ENCODE measurements at regions of chr10 and their contacts with region 1.

Region 1: GRCh38 chr10:102009801-102010425 is 46.1 kb downstream of the ARMH3 start:
- DNase-seq: peak in 1 of 2 donors; percentile 45
- H3K4me3 ChIP-seq: no peak overlapping the region
- H3K27ac ChIP-seq: no peak overlapping the region
- H3K4me1 ChIP-seq: peaks cover 0 to 4% (median 2%) of the 10 kb centered on the region in 4 donors
- H3K27me3 ChIP-seq: no peaks in the 10 kb centered on the region
- CTCF ChIP-seq: peak; percentile 79 to 91

Region 2: DNA sequence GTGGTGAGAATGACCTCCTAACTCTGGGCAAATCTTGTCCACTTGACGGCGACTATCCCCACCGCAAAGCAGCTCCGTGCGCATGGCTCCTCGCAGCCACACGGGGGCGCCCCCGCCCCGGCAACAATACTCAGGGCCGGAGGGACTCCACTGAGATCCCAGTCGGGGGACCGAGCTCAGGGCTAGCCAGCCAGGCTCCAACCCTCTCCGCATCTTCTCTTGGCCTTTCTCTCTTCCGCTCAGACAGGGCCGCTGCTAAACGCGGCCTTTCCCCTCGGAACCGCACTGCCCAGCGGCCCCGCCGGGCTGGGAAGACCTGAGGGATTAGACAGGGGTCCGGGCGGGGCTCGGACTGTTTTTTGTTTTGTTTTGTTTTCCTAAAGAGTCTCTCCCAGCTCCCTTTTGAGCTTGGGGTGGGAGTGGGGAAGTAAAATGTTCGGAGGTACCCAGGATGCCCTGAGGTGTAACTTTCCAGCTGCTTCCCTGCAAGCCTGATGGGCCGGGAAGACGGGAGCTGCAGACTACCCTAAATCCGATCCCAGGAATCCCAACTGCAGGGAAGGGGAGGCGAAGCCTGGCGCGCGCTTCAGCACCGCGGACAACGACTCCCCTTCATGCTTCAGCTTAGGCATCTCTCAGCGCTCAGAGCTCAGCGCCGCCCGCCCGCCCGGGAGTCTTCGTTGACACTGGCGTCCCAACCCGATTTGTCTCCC is 169.0 kb before region 1 on chr10:
- intact Hi-C with region 1: loop called (anchors 2 kb)
- DNase-seq: peak; percentile 76 to 80
- H3K4me3 ChIP-seq: peak overlapping the region in 1 of 2 donors; percentile 33
- H3K27ac ChIP-seq: no peak overlapping the region
- H3K4me1 ChIP-seq: peaks cover 0 to 32% (median 23%) of the 10 kb centered on the region in 4 donors
- H3K27me3 ChIP-seq: peaks cover 0 to 18% of the 10 kb centered on the region in 2 donors
- CTCF ChIP-seq: peak; percentile 55 to 77

Region 3: GRCh38 chr10:101889256-101890210 is 120.4 kb before region 1 on chr10:
- intact Hi-C with region 1: loop called (anchors 5 kb)
- DNase-seq: peak; percentile 63 to 75
- H3K4me3 ChIP-seq: no peak overlapping the region
- H3K27ac ChIP-seq: no peak overlapping the region
- H3K4me1 ChIP-seq: no peaks in the 10 kb centered on the region
- H3K27me3 ChIP-seq: no peaks in the 10 kb centered on the region
- CTCF ChIP-seq: peak; percentile 54 to 66